ENCODE measurements at regions of chr18 and their contacts with region 1.

Region 1: DNA sequence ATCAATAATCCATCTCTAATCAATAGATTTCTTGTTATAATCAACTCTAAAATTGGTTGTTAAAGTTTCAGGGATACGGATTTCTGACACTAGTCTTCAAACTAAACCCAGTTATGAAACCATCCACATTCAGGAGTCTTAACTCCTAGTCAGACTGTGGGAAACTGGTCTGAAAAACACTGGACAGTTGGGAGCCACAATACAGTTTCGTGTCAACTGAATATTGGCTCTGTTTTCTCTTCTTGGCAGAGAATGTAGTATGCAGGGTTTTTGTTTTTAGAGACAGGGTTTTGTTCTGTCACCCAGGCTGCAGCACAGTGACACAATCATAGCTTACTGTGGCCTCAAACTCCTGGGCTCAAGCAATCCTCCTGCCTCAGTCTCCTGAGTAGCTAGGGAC is 123.1 kb downstream of the RTTN start:
- DNase-seq: no peak
- ATAC-seq: no peak
- H3K4me3 ChIP-seq: no peak overlapping the region
- H3K4me3 Mint-ChIP-seq: no peak overlapping the region
- H3K27ac ChIP-seq: no peak overlapping the region
- H3K27ac Mint-ChIP-seq: no peak overlapping the region
- H3K4me1 ChIP-seq: no peaks in the 10 kb centered on the region
- H3K4me1 Mint-ChIP-seq: no peaks in the 10 kb centered on the region
- H3K27me3 ChIP-seq: no peaks in the 10 kb centered on the region
- H3K27me3 Mint-ChIP-seq: no peaks in the 10 kb centered on the region
- CTCF ChIP-seq: no peak

Region 2: GRCh38 chr18:68714609-68715496 is 1367.6 kb before region 1 on chr18 and contains the start of gene TMX3:
- CTCF ChIA-PET with region 1: no interaction called
- POLR2A ChIA-PET with region 1: no interaction called
- intact Hi-C with region 1: loop called in 1 of 2 experiments (anchors 10 kb)
- DNase-seq: peak; percentile 81 to 97 (median 90)
- ATAC-seq: peak; percentile 98
- H3K4me3 ChIP-seq: peak within 1 kb of the TSS; percentile 81
- H3K4me3 Mint-ChIP-seq: peak within 1 kb of the TSS; percentile 99
- H3K27ac ChIP-seq: peak within 1 kb of the TSS; percentile 16 to 36
- H3K27ac Mint-ChIP-seq: peak within 1 kb of the TSS; percentile 90
- H3K4me1 ChIP-seq: peaks cover 23% of the 10 kb centered on the region
- H3K4me1 Mint-ChIP-seq: peaks cover 55% of the 10 kb centered on the region
- H3K27me3 ChIP-seq: no peaks in the 10 kb centered on the region
- H3K27me3 Mint-ChIP-seq: no peaks in the 10 kb centered on the region
- CTCF ChIP-seq: no peak
- total RNA-seq, gene TMX3: 30.9 to 33.3 TPM

Region 3: DNA sequence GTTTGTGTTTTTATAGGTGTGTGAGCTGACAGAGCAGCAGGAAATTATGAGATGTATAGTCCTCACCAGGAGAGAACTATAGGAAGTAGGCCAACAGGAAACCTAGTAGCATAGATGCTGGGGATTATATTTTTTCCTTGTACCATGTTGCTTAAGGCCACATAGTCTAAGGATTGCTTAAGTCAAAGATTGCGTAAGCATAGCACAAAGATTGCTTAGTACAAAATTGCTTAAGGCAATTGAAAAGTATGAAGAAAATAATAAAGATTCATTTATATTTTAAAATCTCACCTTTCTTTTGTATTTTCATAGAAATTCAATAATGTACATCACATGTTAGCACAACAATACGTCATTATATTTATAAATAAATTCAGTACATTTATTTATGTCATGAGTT is 1303.2 kb before region 1 on chr18:
- CTCF ChIA-PET with region 1: no interaction called
- POLR2A ChIA-PET with region 1: no interaction called
- intact Hi-C with region 1: no loop called
- DNase-seq: peak in 1 of 14 experiments; percentile 9
- ATAC-seq: no peak
- H3K4me3 ChIP-seq: no peak overlapping the region
- H3K4me3 Mint-ChIP-seq: no peak overlapping the region
- H3K27ac ChIP-seq: no peak overlapping the region
- H3K27ac Mint-ChIP-seq: no peak overlapping the region
- H3K4me1 ChIP-seq: no peaks in the 10 kb centered on the region
- H3K4me1 Mint-ChIP-seq: no peaks in the 10 kb centered on the region
- H3K27me3 ChIP-seq: no peaks in the 10 kb centered on the region
- H3K27me3 Mint-ChIP-seq: no peaks in the 10 kb centered on the region
- CTCF ChIP-seq: no peak

Region 4: DNA sequence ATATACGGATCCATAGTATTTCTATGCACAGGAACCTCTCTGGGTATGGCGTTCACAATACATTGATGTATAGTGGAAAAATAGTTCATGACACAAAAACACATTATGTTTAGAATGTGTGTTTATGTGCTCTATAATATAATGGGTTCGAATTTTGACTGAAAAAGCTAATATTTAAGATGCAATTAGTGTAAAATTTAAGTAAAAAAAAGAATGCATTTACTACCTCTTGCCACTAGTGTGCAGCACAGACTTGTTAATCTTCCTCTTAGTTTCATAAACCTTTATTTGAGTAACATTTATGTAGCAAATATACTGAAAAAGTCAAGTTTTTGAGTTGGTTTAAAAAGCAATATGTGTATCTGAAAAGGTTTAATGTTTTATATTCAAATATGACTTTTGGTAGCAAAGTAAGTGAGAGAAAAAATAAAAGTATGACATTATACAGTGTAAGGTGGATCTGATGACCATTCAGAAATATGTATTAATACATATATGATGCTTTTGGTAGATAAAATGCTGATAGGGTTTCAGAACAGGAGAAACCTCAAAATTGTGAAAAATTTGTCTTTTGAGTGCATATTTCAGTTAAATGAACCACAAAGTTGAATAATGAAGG is 1235.1 kb before region 1 on chr18:
- CTCF ChIA-PET with region 1: no interaction called
- POLR2A ChIA-PET with region 1: no interaction called
- intact Hi-C with region 1: loop called (anchors 1 to 2 kb)
- DNase-seq: peak in 3 of 14 experiments; percentile 12 to 23 (median 21)
- ATAC-seq: no peak
- H3K4me3 ChIP-seq: no peak overlapping the region
- H3K4me3 Mint-ChIP-seq: no peak overlapping the region
- H3K27ac ChIP-seq: no peak overlapping the region
- H3K27ac Mint-ChIP-seq: no peak overlapping the region
- H3K4me1 ChIP-seq: no peaks in the 10 kb centered on the region
- H3K4me1 Mint-ChIP-seq: no peaks in the 10 kb centered on the region
- H3K27me3 ChIP-seq: no peaks in the 10 kb centered on the region
- H3K27me3 Mint-ChIP-seq: no peaks in the 10 kb centered on the region
- CTCF ChIP-seq: peak; percentile 59

Region 5: GRCh38 chr18:69636529-69637301 is 445.7 kb before region 1 on chr18:
- CTCF ChIA-PET with region 1: interaction called, 6 read pairs
- POLR2A ChIA-PET with region 1: no interaction called
- intact Hi-C with region 1: loop called (anchors 1 to 2 kb)
- DNase-seq: peak in 9 of 14 experiments; percentile 4 to 50 (median 11)
- ATAC-seq: peak; percentile 76
- H3K4me3 ChIP-seq: no peak overlapping the region
- H3K4me3 Mint-ChIP-seq: no peak overlapping the region
- H3K27ac ChIP-seq: no peak overlapping the region
- H3K27ac Mint-ChIP-seq: no peak overlapping the region
- H3K4me1 ChIP-seq: no peaks in the 10 kb centered on the region
- H3K4me1 Mint-ChIP-seq: no peaks in the 10 kb centered on the region
- H3K27me3 ChIP-seq: no peaks in the 10 kb centered on the region
- H3K27me3 Mint-ChIP-seq: peaks cover 4% of the 10 kb centered on the region
- CTCF ChIP-seq: peak; percentile 29